Naive thymus-derived CD4-positive, alpha-beta T cell (primary cell): ENCODE measurements at regions of chr5 and their contacts with region 1.

Region 1: GRCh38 chr5:140718241-140718580 is 18.0 kb downstream of the ZMAT2 start:
- DNase-seq: no peak
- ATAC-seq: no peak
- H3K4me3 ChIP-seq: no peak overlapping the region
- H3K4me3 Mint-ChIP-seq: peak overlapping the region in 4 of 10 donors; percentile 13 to 58 (median 36)
- H3K27ac ChIP-seq: no peak overlapping the region
- H3K27ac Mint-ChIP-seq: peak overlapping the region in 1 of 9 donors; percentile 67
- H3K4me1 ChIP-seq: no peaks in the 10 kb centered on the region
- H3K4me1 Mint-ChIP-seq: peaks cover 0 to 10% (median 2%) of the 10 kb centered on the region in 7 donors
- H3K27me3 ChIP-seq: peaks cover 0 to 4% of the 10 kb centered on the region in 2 donors
- H3K27me3 Mint-ChIP-seq: peaks cover 0 to 15% (median 12%) of the 10 kb centered on the region in 5 donors

Region 2: DNA sequence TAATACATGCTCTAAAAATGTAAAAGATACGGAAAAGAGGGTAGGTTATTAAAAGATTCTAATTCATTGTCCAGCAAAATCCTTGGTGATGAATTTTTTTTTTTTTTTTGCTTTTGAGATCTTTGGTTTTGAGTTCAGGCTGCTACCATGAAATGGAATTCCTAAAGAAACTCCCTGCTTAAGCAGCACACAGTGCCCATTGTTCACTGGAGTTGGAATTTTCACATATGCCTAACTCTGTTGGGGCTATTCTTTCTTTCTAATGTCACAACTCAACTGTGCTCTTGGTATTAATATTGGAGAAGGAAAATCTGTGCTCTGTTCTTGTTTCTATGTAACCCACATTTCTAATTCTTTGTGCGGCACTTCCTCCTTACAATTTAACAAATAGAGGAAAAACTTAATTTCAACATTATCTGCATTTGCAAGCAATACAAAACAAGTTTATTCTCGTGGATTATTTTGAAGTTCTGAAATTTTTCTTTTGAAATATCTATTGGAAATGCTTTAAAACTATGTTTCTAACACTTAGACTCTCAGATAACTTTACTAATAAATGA is 1403.1 kb before region 1 on chr5:
- CTCF ChIA-PET with region 1: no interaction called
- POLR2A ChIA-PET with region 1: no interaction called
- intact Hi-C with region 1: no loop called
- DNase-seq: no peak
- ATAC-seq: no peak
- H3K4me3 ChIP-seq: no peak overlapping the region
- H3K4me3 Mint-ChIP-seq: peak overlapping the region in 2 of 10 donors; percentile 39 to 41
- H3K27ac ChIP-seq: no peak overlapping the region
- H3K27ac Mint-ChIP-seq: peak overlapping the region in 2 of 9 donors; percentile 34 to 59
- H3K4me1 ChIP-seq: peaks cover 32 to 33% of the 10 kb centered on the region in 2 donors
- H3K4me1 Mint-ChIP-seq: peaks cover 19 to 51% (median 40%) of the 10 kb centered on the region in 7 donors
- H3K27me3 ChIP-seq: no peaks in the 10 kb centered on the region
- H3K27me3 Mint-ChIP-seq: no peaks in the 10 kb centered on the region

Region 3: DNA sequence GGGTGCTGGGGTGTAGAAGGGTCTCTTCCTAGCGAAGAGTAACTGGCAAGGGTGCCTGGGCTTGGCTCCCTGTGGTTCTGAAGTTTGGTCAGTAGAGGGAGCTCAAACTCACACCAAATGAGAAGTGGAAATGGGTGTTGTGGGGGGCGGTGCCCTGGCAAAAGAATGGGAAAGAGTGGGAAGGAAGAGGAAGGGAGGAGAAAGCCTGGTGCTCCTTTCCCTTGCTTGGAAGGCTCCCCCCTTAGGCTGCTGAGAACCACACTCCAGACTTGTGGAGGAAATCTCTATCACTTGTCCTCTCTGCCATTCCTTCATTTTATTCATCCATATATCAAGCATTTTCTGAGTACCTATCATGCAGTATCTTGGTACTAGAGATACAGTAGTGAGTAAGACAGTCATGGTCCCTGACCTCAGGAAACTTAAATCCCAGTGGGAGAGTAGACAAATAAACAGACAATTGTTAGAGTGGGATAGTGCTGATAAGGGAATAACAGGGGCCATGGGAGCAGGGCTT is 345.2 kb before region 1 on chr5:
- CTCF ChIA-PET with region 1: interaction called, 37 read pairs
- POLR2A ChIA-PET with region 1: no interaction called
- intact Hi-C with region 1: loop called (anchors 1 kb)
- DNase-seq: peak in 6 of 9 donors; percentile 22 to 47 (median 36)
- ATAC-seq: peak; percentile 76
- H3K4me3 ChIP-seq: no peak overlapping the region
- H3K4me3 Mint-ChIP-seq: no peak overlapping the region
- H3K27ac ChIP-seq: no peak overlapping the region
- H3K27ac Mint-ChIP-seq: peak overlapping the region in 1 of 9 donors; percentile 4
- H3K4me1 ChIP-seq: no peaks in the 10 kb centered on the region
- H3K4me1 Mint-ChIP-seq: peaks cover 0 to 8% (median 4%) of the 10 kb centered on the region in 7 donors
- H3K27me3 ChIP-seq: no peaks in the 10 kb centered on the region
- H3K27me3 Mint-ChIP-seq: no peaks in the 10 kb centered on the region

Region 4: DNA sequence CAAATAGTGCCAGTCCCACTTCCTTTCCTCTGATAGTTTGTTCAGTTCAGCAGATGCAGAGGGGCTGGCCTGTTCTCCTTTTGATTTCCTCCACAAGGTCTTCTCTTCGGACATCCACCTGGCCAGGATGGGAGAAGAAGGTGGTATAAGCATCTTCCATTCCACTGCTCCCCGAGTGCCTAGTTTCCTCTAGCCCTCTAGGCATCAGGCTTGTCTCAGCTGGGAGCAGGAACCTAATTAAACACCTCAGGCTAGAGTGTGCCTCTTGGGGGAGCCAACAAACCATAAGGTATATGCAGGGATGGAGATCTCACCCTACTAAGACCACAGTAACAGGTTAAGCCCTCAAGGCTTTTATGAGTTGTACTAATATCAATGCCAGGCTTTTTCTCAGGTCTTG is 44.0 kb before region 1 on chr5:
- CTCF ChIA-PET with region 1: interaction called, 3 read pairs
- POLR2A ChIA-PET with region 1: interaction called, 3 read pairs
- intact Hi-C with region 1: loop called in 1 of 2 experiments (anchors 1 kb)
- DNase-seq: no peak
- ATAC-seq: no peak
- H3K4me3 ChIP-seq: no peak overlapping the region
- H3K4me3 Mint-ChIP-seq: no peak overlapping the region
- H3K27ac ChIP-seq: no peak overlapping the region
- H3K27ac Mint-ChIP-seq: peak overlapping the region in 3 of 9 donors; percentile 19 to 63 (median 22)
- H3K4me1 ChIP-seq: no peaks in the 10 kb centered on the region
- H3K4me1 Mint-ChIP-seq: peaks cover 0 to 7% (median 0%) of the 10 kb centered on the region in 7 donors
- H3K27me3 ChIP-seq: no peaks in the 10 kb centered on the region
- H3K27me3 Mint-ChIP-seq: no peaks in the 10 kb centered on the region

Region 5: GRCh38 chr5:140753561-140753960 is 35.4 kb after region 1 on chr5:
- CTCF ChIA-PET with region 1: no interaction called
- POLR2A ChIA-PET with region 1: no interaction called
- intact Hi-C with region 1: no loop called
- DNase-seq: no peak
- ATAC-seq: no peak
- H3K4me3 ChIP-seq: no peak overlapping the region
- H3K4me3 Mint-ChIP-seq: no peak overlapping the region
- H3K27ac ChIP-seq: no peak overlapping the region
- H3K27ac Mint-ChIP-seq: no peak overlapping the region
- H3K4me1 ChIP-seq: no peaks in the 10 kb centered on the region
- H3K4me1 Mint-ChIP-seq: peaks cover 0 to 2% (median 0%) of the 10 kb centered on the region in 7 donors
- H3K27me3 ChIP-seq: no peaks in the 10 kb centered on the region
- H3K27me3 Mint-ChIP-seq: peaks cover 0 to 44% (median 17%) of the 10 kb centered on the region in 5 donors